Mammary epithelial cell (primary cell): ENCODE measurements at regions of chr3 and their contacts with region 1.

Region 1: GRCh38 chr3:181948286-181948685 is 236.6 kb downstream of the SOX2 start:
- DNase-seq: peak; percentile 11
- H3K4me3 ChIP-seq: no peak overlapping the region
- H3K27ac ChIP-seq: no peak overlapping the region
- H3K4me1 ChIP-seq: no peaks in the 10 kb centered on the region
- H3K27me3 ChIP-seq: no peaks in the 10 kb centered on the region
- CTCF ChIP-seq: peak; percentile 47 to 92

Region 2: GRCh38 chr3:181974198-181974597 is 25.9 kb after region 1 on chr3:
- CTCF ChIA-PET with region 1: no interaction called
- dilution Hi-C with region 1: no loop called
- in situ Hi-C with region 1: no loop called
- intact Hi-C with region 1: no loop called
- DNase-seq: peak; percentile 86
- H3K4me3 ChIP-seq: no peak overlapping the region
- H3K27ac ChIP-seq: peak overlapping the region; percentile 32
- H3K4me1 ChIP-seq: peaks cover 16% of the 10 kb centered on the region
- H3K27me3 ChIP-seq: no peaks in the 10 kb centered on the region
- CTCF ChIP-seq: no peak

Region 3: GRCh38 chr3:182490596-182491491 is 542.6 kb after region 1 on chr3:
- CTCF ChIA-PET with region 1: interaction called, 3 read pairs
- dilution Hi-C with region 1: no loop called
- in situ Hi-C with region 1: no loop called
- intact Hi-C with region 1: loop called (anchors 2 kb)
- DNase-seq: peak; percentile 31
- H3K4me3 ChIP-seq: no peak overlapping the region
- H3K27ac ChIP-seq: no peak overlapping the region
- H3K4me1 ChIP-seq: no peaks in the 10 kb centered on the region
- H3K27me3 ChIP-seq: no peaks in the 10 kb centered on the region
- CTCF ChIP-seq: peak; percentile 52 to 63

Region 4: GRCh38 chr3:182644800-182645433 is 696.6 kb after region 1 on chr3:
- CTCF ChIA-PET with region 1: no interaction called
- dilution Hi-C with region 1: no loop called
- in situ Hi-C with region 1: no loop called
- intact Hi-C with region 1: no loop called
- DNase-seq: peak; percentile 85
- H3K4me3 ChIP-seq: no peak overlapping the region
- H3K27ac ChIP-seq: peak overlapping the region; percentile 15
- H3K4me1 ChIP-seq: peaks cover 14% of the 10 kb centered on the region
- H3K27me3 ChIP-seq: no peaks in the 10 kb centered on the region
- CTCF ChIP-seq: no peak